Common myeloid progenitor, CD34-positive (primary cell): ENCODE measurements at regions of chr7 and their contacts with region 1.

Region 1: GRCh38 chr7:4753711-4754432 is 21.6 kb upstream of the AP5Z1 start:
- DNase-seq: peak; percentile 60 to 76 (median 75)
- H3K4me3 ChIP-seq: no peak overlapping the region
- H3K27ac ChIP-seq: no peak overlapping the region
- H3K4me1 ChIP-seq: peaks cover 0 to 16% (median 8%) of the 10 kb centered on the region in 4 experiments
- H3K27me3 ChIP-seq: no peaks in the 10 kb centered on the region

Region 2: DNA sequence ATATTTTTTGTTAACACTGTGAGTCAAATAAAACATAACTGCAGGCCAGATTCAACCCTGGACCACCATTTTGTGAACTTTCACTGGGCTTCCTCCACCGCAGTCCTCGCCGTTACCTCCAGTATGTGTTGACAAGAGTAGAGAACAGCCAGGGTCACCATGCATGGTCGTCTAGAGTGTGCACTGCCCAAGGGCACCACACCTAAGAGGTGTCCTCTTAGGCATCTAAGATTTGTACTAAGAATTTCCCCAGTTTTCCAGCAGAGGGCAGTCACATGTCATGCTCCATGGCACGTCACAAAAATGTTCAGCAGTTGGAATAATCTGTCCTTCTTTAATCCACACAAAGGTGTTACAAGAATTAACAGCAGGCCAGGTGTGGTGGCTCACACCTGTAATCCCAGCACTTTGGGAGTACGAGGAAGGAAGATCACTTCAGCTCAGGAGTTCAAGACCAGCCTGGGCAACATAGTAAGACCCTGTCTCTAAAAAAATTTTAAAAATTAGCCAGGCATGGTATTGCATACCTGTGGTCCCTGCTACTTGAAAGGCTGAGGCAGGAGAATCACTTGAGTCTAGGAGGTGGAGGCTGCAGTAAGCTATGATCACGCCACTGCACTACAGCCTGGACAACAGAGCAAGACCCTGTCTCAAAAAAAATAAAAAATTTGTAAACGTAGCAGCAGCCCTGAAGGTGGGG is 143.0 kb before region 1 on chr7:
- CTCF ChIA-PET with region 1: interaction called, 51 read pairs
- POLR2A ChIA-PET with region 1: no interaction called
- DNase-seq: peak; percentile 75 to 85 (median 82)
- H3K4me3 ChIP-seq: no peak overlapping the region
- H3K27ac ChIP-seq: no peak overlapping the region
- H3K4me1 ChIP-seq: peaks cover 2 to 31% (median 23%) of the 10 kb centered on the region in 4 experiments
- H3K27me3 ChIP-seq: no peaks in the 10 kb centered on the region

Region 3: DNA sequence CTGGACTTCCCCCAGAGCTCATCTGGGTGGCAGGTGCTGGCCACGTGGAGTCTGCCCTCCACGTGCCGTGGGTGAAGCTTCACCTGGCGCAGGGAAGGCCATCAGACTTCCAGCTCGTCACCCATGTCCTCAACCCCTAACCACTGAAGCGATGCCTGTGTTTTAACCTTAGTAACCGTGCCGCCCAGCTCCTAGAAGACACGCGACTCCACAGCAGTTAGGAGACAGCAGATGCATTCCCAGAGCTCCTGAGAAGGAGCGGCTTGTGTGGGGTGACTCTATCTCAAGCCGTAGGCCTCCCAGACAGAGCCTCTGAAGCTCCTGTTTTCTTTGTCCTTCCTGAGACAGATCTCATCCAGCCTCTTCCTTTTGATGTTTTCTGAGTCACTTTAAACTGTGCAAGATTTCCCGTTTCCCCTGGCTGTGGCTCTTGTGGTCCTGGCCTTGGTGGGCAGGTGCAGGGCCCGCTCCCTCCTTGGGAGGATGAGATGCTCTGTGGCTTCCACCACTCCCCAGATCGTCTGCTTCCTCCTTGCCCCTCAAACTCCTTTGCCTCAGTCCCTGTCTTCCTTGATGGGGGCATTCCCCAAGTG is 19.8 kb before region 1 on chr7:
- CTCF ChIA-PET with region 1: interaction called, 15 read pairs
- POLR2A ChIA-PET with region 1: no interaction called
- DNase-seq: peak in 2 of 3 donors; percentile 83 to 84
- H3K4me3 ChIP-seq: peak overlapping the region in 3 of 7 experiments; percentile 5 to 36 (median 28)
- H3K27ac ChIP-seq: no peak overlapping the region
- H3K4me1 ChIP-seq: peaks cover 0 to 43% (median 42%) of the 10 kb centered on the region in 4 experiments
- H3K27me3 ChIP-seq: no peaks in the 10 kb centered on the region